ENCODE measurements at regions of chr9 and their contacts with region 1.

Region 1: GRCh38 chr9:90544488-90544887 is 98.1 kb downstream of the DIRAS2 start:
- DNase-seq: no peak
- H3K4me3 ChIP-seq: no peak overlapping the region
- CTCF ChIP-seq: no peak

Region 2: DNA sequence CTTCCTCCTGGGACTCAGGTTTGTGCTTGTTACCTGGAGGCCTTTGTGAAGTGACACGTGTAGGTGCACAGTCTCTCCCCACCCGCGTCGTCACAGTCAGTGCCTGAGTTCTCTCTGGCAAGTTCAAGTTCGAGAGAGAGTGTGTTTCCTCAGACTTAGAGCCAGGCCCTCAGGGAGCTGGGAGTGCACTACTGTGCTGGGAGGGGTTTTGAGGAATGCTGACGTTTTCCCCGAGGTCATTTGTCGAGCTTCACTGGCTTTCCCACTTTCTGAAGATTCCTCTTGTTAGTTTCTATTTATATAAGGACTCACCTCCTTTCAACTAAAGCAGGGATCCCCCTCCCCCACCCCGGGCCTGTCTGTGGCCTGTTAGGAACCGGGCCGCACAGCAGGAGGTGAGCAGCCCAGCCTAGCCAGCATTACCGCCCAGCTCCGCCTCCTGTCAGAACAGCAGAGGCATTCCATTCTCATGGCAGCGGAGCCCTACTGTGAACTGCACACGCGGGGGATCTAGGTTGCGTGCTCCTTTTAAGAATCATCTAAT is 111.0 kb before region 1 on chr9:
- in situ Hi-C with region 1: loop called (anchors 5 kb)
- DNase-seq: peak; percentile 90
- H3K4me3 ChIP-seq: peak overlapping the region; percentile 33
- CTCF ChIP-seq: no peak

Region 3: DNA sequence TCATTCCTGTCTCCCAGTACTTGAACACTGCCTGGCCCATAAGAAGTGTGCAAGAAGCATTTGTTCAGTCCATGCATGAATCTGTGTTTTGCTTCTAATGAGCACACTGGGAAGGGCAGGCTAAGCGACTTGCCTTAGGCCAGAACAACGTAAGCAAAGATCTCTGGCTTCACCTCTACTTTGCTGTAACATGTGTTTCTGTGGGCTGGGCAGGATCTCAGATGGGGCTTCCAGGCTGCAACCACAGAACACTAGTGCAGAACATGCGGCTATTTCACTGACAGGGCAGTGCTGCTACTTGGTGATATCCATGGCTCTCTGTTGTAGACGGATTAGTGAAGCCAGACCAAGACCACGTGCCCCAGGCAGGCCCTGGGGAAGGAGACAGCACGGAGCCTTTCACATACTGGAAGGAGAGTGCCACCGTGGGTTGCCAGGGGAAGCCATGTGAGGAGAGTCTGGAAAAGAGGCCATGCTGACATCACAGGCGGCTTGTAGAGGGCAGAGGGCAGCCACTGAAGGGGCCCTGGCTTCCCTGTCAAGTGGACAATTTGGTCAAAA is 88.2 kb after region 1 on chr9:
- in situ Hi-C with region 1: no loop called
- DNase-seq: no peak
- H3K4me3 ChIP-seq: no peak overlapping the region
- CTCF ChIP-seq: no peak

Region 4: DNA sequence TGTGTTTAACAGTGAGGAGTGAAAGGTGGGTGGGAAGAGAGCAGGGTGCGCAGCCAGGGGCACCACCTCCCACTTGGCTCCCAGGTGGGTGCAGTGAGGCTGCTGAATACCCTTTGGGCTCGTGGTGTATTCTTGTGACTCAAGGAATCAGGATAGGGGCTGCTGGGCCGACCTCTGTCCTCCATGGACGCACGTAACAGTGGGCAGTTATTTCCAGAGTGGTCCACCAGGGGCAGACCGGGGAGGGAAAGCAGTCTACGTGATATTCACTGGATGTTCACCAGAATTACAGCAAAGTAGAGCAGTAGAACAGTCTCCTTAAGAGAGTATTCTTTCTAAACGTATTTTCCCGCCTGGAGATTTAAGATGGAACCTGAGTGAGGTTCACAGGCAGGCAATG is 345.6 kb after region 1 on chr9:
- in situ Hi-C with region 1: no loop called
- DNase-seq: no peak
- H3K4me3 ChIP-seq: no peak overlapping the region
- CTCF ChIP-seq: no peak